GM12878 (cell line): ENCODE measurements at regions of chr5 and their contacts with region 1.

Region 1: DNA sequence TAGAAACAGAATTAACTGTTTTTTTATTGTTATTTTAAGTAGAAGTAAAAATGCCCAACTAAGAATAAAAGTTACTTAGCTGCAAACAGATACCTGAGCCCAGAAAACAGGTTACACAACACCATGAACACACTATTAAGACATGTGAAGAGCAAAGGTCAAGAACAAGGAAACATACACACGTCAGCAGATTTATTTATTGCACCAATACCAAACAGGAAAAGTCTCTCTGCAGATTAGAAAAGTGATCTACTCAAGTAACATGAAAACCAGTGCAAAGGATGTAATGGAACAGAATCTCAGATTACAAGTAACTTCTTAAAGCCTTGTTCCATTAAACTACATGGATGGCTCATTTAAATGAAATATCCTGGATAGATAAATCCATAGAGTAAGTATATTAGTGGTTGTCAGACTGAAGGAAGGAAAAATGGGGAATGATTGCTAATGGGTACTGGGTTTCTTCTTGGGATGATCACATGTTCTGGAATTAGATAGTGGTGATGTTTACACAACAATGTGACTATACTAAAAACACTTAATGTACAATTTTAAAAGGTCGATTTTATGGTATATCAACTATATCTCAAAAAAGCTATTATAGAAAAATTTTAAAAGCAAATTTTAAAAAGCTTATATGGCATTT is 6.1 kb downstream of the SAR1B start:
- DNase-seq: no peak
- ATAC-seq: peak; percentile 53
- H3K4me3 ChIP-seq: no peak overlapping the region
- H3K27ac ChIP-seq: no peak overlapping the region
- H3K4me1 ChIP-seq: peaks cover 3% of the 10 kb centered on the region; the same call in 1 of the 2 replicates
- H3K27me3 ChIP-seq: no peaks in the 10 kb centered on the region
- CTCF ChIP-seq: no peak
- EP300 ChIP-seq: no peak
- POLR2A ChIP-seq: no peak
- RAD21 ChIP-seq: no peak

Region 2: GRCh38 chr5:134568761-134569695 is 57.5 kb before region 1 on chr5:
- CTCF ChIA-PET with region 1: no interaction called
- POLR2A ChIA-PET with region 1: no interaction called
- RAD21 ChIA-PET with region 1: no interaction called
- SMC1A ChIA-PET with region 1: no interaction called
- in situ Hi-C with region 1: no loop called
- intact Hi-C with region 1: no loop called
- DNase-seq: no peak
- ATAC-seq: no peak
- H3K4me3 ChIP-seq: no peak overlapping the region
- H3K27ac ChIP-seq: no peak overlapping the region
- H3K4me1 ChIP-seq: peaks cover 3% of the 10 kb centered on the region; the same call in 1 of the 2 replicates
- H3K27me3 ChIP-seq: no peaks in the 10 kb centered on the region
- CTCF ChIP-seq: no peak
- EP300 ChIP-seq: no peak
- POLR2A ChIP-seq: no peak
- RAD21 ChIP-seq: no peak

Region 3: DNA sequence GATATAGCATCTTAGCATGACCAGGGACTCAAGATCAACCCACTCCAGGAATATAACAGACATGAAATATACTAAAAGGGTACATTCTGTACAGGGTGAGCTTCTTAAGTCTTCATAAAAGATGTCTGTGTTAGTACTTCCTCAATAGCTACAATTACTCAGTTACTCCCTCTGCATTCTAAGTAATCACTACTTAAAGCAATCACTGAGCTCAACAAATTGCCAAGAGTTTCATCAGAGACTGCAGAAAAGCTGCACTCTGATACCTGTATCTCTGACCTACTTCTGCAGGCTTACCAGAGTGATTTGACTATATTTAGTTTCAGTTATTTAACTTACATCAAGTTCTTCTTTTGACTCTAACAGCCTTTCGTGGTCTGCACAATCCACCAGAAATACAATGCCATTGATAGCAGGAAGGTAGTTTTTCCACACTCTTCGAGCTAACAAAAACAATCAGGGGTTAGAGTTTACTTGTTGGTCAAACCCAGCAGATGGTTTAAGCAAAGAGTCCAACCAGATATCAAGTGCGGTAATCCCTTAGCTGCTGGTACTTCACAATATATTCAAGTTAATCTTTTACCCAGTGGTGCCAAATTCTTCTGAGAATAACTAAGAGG is 17.1 kb before region 1 on chr5:
- CTCF ChIA-PET with region 1: interaction called, 5 read pairs
- POLR2A ChIA-PET with region 1: interaction called, 11 read pairs
- RAD21 ChIA-PET with region 1: interaction called, 5 read pairs
- SMC1A ChIA-PET with region 1: interaction called, 6 read pairs
- in situ Hi-C with region 1: no loop called
- intact Hi-C with region 1: no loop called
- DNase-seq: peak; percentile 41
- ATAC-seq: peak; percentile 83
- H3K4me3 ChIP-seq: no peak overlapping the region; the same call in 1 of the 2 replicates
- H3K27ac ChIP-seq: peak overlapping the region; percentile 68
- H3K4me1 ChIP-seq: peaks cover 17% of the 10 kb centered on the region
- H3K27me3 ChIP-seq: no peaks in the 10 kb centered on the region
- CTCF ChIP-seq: no peak
- EP300 ChIP-seq: no peak
- POLR2A ChIP-seq: no peak
- RAD21 ChIP-seq: no peak

Region 4: DNA sequence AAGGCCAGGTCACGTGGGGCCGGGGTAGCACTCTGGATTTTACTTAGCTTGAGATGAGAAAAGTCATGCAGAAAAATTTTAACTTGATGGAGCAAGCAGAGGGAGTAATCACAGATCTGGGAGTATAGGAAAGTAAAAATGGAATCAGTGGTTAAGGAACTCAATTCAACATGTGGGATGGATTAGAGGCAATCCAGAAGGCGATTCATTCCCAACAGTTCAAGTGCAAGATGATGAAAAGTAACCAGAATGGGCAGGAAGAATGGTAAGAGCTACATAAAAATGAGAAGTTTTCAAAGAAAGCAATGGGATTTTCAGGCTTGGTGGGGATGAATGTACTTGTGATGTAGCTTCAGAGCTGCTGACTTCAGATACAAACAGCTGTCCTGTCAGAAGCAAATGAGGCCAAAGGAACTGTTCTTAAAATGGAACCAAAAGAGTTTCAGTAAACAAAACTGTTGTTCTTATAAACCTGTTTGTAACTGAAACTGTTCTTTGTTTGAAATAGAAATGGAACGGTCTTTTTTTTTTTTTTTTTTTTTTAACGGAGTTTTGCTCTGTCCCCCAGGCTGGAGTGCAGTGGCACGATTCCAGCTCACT is 16.5 kb after region 1 on chr5:
- CTCF ChIA-PET with region 1: interaction called, 8 read pairs
- POLR2A ChIA-PET with region 1: interaction called, 20 read pairs
- RAD21 ChIA-PET with region 1: interaction called, 3 read pairs
- SMC1A ChIA-PET with region 1: interaction called, 4 read pairs
- in situ Hi-C with region 1: no loop called
- intact Hi-C with region 1: no loop called
- DNase-seq: peak; percentile 62
- ATAC-seq: peak; percentile 42
- H3K4me3 ChIP-seq: no peak overlapping the region
- H3K27ac ChIP-seq: peak overlapping the region; percentile 57
- H3K4me1 ChIP-seq: peaks cover 29% of the 10 kb centered on the region
- H3K27me3 ChIP-seq: no peaks in the 10 kb centered on the region
- CTCF ChIP-seq: no peak
- EP300 ChIP-seq: no peak
- POLR2A ChIP-seq: no peak
- RAD21 ChIP-seq: no peak